A549 (cell line): ENCODE measurements at regions of chr5 and their contacts with region 1.

Region 1: DNA sequence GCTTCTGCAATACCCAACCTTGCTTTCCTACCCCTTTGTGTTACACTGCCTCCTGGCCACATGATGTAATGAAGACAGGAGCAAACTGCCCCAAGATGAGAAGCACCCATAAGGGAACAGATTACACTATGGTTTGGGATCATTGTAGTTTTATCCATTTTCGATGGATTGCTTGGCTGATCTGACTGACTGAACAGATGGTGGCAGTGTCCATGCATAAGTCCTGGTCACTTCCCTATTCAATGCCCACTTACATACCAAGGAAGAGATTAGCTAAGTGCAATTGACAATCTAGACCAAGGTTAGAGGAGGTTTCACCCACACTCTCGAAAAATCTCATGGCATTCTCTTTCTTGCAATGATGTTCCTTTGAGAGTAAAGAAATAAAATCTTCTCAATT is 319.9 kb downstream of the RAB3C start:
- DNase-seq: peak in 1 of 2 experiments; percentile 73
- ATAC-seq: peak; percentile 66 to 80; a peak in 5 of 6 replicates
- H3K4me3 ChIP-seq: no peak overlapping the region
- H3K27ac ChIP-seq: peak overlapping the region; percentile 60 to 71
- H3K4me1 ChIP-seq: peaks cover 30% of the 10 kb centered on the region
- CTCF ChIP-seq: peak; percentile 50
- EP300 ChIP-seq: no peak
- POLR2A ChIP-seq: no peak
- RAD21 ChIP-seq: peak; percentile 68 to 69

Region 2: GRCh38 chr5:58965677-58966414 is 63.1 kb after region 1 on chr5:
- CTCF ChIA-PET with region 1: interaction called, 14 read pairs
- POLR2A ChIA-PET with region 1: interaction called, 3 read pairs
- DNase-seq: no peak
- ATAC-seq: peak; percentile 14 to 21; a peak in 3 of 6 replicates
- H3K4me3 ChIP-seq: no peak overlapping the region
- H3K27ac ChIP-seq: peak overlapping the region; percentile 81 to 85
- H3K4me1 ChIP-seq: peaks cover 87% of the 10 kb centered on the region
- CTCF ChIP-seq: peak; percentile 14; the same call in 1 of the 3 replicates
- EP300 ChIP-seq: no peak
- POLR2A ChIP-seq: no peak
- RAD21 ChIP-seq: no peak